ENCODE measurements at regions of chr3 and their contacts with region 1.

Region 1: DNA sequence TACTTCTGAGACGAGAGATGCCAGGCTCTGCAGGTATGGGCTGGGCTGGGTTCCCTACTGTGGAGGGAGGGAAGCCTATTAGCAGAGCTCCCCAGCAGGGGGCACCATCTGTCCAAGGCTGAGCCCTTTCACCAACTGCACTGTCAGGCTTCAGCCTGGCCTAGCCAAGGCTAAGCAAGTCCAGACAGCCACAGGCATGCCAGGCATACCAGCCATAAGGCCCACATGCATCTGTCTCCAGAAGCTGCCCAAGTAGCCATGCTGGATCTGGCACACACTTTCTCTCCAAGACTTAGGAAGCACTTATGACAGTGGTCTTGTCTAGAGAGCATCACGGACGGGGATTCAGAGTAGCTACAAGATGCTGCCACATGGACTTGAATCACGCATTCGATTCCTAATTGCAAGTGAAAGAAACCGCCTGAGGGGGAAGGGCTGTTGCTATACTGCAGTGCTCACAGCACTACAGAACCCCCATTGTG is 28.3 kb downstream of the RUVBL1 start:
- DNase-seq: peak; percentile 77 to 98 (median 88)

Region 2: DNA sequence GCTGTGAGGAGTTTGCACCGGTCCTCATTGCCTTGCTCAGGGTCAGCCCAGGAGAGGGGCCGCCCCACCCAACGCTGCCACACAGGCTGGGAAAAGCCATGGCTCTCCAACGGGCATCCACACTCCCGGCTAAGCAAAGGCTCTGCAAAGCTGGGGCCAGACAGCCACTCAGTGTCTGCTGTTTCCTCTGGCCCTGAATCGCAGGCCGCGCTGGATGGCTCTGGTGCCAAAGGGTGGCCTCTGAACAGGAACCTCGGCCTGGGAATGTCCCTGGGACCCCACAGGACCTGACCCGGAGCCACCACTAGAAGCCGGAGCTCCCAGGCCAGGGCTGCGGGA is 512.4 kb after region 1 on chr3:
- intact Hi-C with region 1: loop called (anchors 5 kb)
- DNase-seq: peak in 3 of 10 donors; percentile 14 to 87 (median 16)

Measured in posterior cingulate gyrus (tissue), 11 donors.